Activated naive CD4-positive, alpha-beta T cell treated with anti-CD3 and anti-CD28 coated beads for 36 hours (primary cell): ENCODE measurements at regions of chr14 and their contacts with region 1.

Region 1: DNA sequence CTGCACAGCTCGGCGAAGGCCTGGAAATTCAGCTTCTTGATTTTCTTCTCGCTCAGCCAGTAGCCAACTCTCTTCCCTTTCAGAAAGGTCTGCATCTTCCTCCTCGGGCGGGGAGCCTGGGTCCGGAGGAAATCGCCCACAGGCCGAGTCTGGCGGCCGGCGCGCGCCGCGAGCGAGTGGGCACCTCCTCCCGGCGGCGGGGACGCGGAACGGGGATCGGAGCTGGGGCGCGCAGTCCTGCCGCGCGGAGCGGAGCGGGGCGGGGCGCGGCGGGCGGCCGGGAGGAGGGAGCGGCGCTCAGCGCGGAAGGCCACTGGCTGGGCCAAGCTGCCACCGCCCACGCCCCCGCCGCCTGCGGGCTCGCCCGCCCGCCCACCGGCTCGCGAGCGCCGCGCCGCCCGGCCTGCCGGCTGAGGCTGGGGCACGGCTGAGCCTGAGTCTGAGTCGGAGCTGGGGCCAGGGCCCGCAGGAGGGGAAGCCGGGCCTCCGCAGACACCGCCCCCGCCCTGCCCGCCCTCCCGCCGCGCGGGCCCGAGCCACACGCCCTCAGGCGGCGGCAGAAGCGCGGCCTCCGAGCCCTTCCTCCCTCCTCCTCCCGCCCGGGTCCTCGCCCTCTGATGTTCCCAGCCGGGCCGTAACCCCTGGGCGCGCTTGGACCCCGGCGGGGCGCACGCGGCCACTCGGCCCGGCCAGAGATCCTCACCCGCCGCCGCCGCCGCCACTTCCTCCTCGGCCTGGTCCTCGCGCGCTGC is 480 bp downstream of the ITPK1 start:
- DNase-seq: peak; percentile 80
- H3K4me3 Mint-ChIP-seq: peak overlapping the region; percentile 77
- H3K27ac Mint-ChIP-seq: no peak overlapping the region
- H3K4me1 Mint-ChIP-seq: peaks cover 24% of the 10 kb centered on the region
- H3K27me3 Mint-ChIP-seq: no peaks in the 10 kb centered on the region

Region 2: DNA sequence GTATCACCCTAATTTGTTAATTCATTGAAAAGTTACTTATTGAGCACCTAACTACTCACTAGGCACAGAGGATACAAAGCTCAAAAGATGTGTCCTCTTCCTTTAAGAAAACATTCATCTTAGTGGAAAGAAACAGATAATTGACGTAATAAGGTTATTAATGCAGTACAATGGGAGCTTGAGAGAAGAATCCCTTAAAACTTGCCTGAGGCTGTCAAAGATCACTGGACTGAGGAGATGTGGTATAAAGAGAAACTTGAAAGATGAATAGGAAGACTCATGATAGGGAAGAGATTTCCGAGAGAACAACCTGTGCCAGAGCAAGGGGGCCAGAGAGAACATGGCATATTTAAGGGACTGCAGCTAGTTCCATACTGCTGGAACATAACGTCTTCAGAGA is 302.0 kb before region 1 on chr14:
- CTCF ChIA-PET with region 1: no interaction called
- intact Hi-C with region 1: no loop called
- DNase-seq: no peak
- H3K4me3 Mint-ChIP-seq: no peak overlapping the region
- H3K27ac Mint-ChIP-seq: no peak overlapping the region
- H3K4me1 Mint-ChIP-seq: no peaks in the 10 kb centered on the region
- H3K27me3 Mint-ChIP-seq: no peaks in the 10 kb centered on the region

Region 3: GRCh38 chr14:92951912-92952471 is 163.3 kb before region 1 on chr14:
- CTCF ChIA-PET with region 1: interaction called, 18 read pairs
- intact Hi-C with region 1: loop called (anchors 1 kb)
- DNase-seq: peak; percentile 84
- H3K4me3 Mint-ChIP-seq: no peak overlapping the region
- H3K27ac Mint-ChIP-seq: no peak overlapping the region
- H3K4me1 Mint-ChIP-seq: peaks cover 4% of the 10 kb centered on the region
- H3K27me3 Mint-ChIP-seq: no peaks in the 10 kb centered on the region

Region 4: GRCh38 chr14:93132470-93133065 is 17.3 kb after region 1 on chr14:
- CTCF ChIA-PET with region 1: interaction called, 100 read pairs
- intact Hi-C with region 1: no loop called
- DNase-seq: peak; percentile 26
- H3K4me3 Mint-ChIP-seq: no peak overlapping the region
- H3K27ac Mint-ChIP-seq: no peak overlapping the region
- H3K4me1 Mint-ChIP-seq: no peaks in the 10 kb centered on the region
- H3K27me3 Mint-ChIP-seq: no peaks in the 10 kb centered on the region

Region 5: DNA sequence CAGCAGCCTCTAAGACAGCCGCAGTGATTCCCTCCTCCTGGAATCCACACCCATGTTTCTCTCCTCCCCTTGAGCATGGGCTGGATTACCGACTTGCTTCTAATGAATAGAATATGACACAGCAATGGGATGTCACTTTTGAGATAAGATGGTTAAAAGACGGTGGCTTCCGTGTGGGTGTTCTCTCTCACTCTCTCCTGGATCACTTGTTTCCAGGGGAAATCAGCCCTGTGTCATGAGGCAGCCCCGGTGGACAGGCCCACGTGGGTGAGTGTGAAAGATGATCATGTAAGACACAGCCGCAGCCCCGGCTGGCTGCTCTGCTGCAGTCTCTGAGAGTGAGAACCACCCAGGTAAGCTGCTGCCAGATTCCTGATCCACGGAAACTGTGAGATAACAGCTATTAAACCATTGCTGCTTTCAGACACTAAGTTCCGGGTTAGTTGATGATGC is 58.7 kb after region 1 on chr14:
- CTCF ChIA-PET with region 1: interaction called, 31 read pairs
- intact Hi-C with region 1: loop called (anchors 2 kb)
- DNase-seq: no peak
- H3K4me3 Mint-ChIP-seq: no peak overlapping the region
- H3K27ac Mint-ChIP-seq: no peak overlapping the region
- H3K4me1 Mint-ChIP-seq: no peaks in the 10 kb centered on the region
- H3K27me3 Mint-ChIP-seq: no peaks in the 10 kb centered on the region

Region 6: GRCh38 chr14:93219103-93219726 is 104.0 kb after region 1 on chr14:
- CTCF ChIA-PET with region 1: interaction called, 11 read pairs
- intact Hi-C with region 1: loop called (anchors 1 kb)
- DNase-seq: peak; percentile 58
- H3K4me3 Mint-ChIP-seq: no peak overlapping the region
- H3K27ac Mint-ChIP-seq: no peak overlapping the region
- H3K4me1 Mint-ChIP-seq: no peaks in the 10 kb centered on the region
- H3K27me3 Mint-ChIP-seq: no peaks in the 10 kb centered on the region

Region 7: GRCh38 chr14:93619176-93619793 is 504.0 kb after region 1 on chr14:
- CTCF ChIA-PET with region 1: no interaction called
- intact Hi-C with region 1: loop called (anchors 1 kb)
- DNase-seq: peak; percentile 63
- H3K4me3 Mint-ChIP-seq: no peak overlapping the region
- H3K27ac Mint-ChIP-seq: no peak overlapping the region
- H3K4me1 Mint-ChIP-seq: no peaks in the 10 kb centered on the region
- H3K27me3 Mint-ChIP-seq: peaks cover 2% of the 10 kb centered on the region